ENCODE measurements at regions of chr2 and their contacts with region 1.

Region 1: GRCh38 chr2:218671654-218672566 is at the starts of genes RNF25 and STK36:
- DNase-seq: peak; percentile 60 to 86 (median 79)
- ATAC-seq: peak; percentile 96
- H3K4me3 ChIP-seq: peak within 1 kb of the TSS; percentile 81
- H3K4me3 Mint-ChIP-seq: peak within 1 kb of the TSS; percentile 88 to 100 (median 98)
- H3K27ac ChIP-seq: peak within 1 kb of the TSS; percentile 84
- H3K27ac Mint-ChIP-seq: peak within 1 kb of the TSS; percentile 90 to 98 (median 96)
- H3K4me1 ChIP-seq: peaks cover 9 to 15% of the 10 kb centered on the region in 2 donors
- H3K4me1 Mint-ChIP-seq: peaks cover 14 to 29% (median 24%) of the 10 kb centered on the region in 7 donors
- H3K27me3 ChIP-seq: no peaks in the 10 kb centered on the region
- H3K27me3 Mint-ChIP-seq: no peaks in the 10 kb centered on the region
- total RNA-seq, gene RNF25: 12.6 to 33.4 (median 28.3) TPM
- total RNA-seq, gene STK36: 18.9 to 28.1 (median 19.7) TPM

Region 2: GRCh38 chr2:218471982-218472381 is 199.9 kb before region 1 on chr2:
- CTCF ChIA-PET with region 1: no interaction called
- POLR2A ChIA-PET with region 1: no interaction called
- intact Hi-C with region 1: no loop called
- DNase-seq: no peak
- ATAC-seq: peak; percentile 57
- H3K4me3 ChIP-seq: no peak overlapping the region
- H3K4me3 Mint-ChIP-seq: no peak overlapping the region
- H3K27ac ChIP-seq: no peak overlapping the region
- H3K27ac Mint-ChIP-seq: no peak overlapping the region
- H3K4me1 ChIP-seq: no peaks in the 10 kb centered on the region
- H3K4me1 Mint-ChIP-seq: peaks cover 0 to 12% (median 7%) of the 10 kb centered on the region in 7 donors
- H3K27me3 ChIP-seq: no peaks in the 10 kb centered on the region
- H3K27me3 Mint-ChIP-seq: no peaks in the 10 kb centered on the region

Region 3: DNA sequence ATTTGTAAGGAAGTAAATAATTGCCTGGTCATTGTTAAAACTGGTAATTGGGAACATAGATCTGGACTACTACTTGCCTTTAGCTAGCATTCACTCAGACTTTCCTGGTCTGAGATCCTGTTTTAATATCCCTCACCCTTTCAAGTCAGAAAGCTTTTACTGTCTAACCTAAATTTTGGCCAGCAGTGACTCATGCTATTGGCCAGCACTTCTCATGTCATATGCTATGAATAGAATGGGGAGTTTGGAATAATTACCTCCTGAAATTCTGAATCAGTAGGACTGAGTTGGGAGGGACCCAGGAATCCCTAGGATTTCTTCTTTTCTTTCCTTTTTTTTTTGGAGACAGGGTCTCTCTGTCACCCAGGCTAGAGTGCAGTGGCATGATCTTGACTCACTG is 19.3 kb after region 1 on chr2:
- CTCF ChIA-PET with region 1: interaction called, 5 read pairs
- POLR2A ChIA-PET with region 1: no interaction called
- intact Hi-C with region 1: loop called in 1 of 2 experiments (anchors 1 kb)
- DNase-seq: no peak
- ATAC-seq: no peak
- H3K4me3 ChIP-seq: no peak overlapping the region
- H3K4me3 Mint-ChIP-seq: no peak overlapping the region
- H3K27ac ChIP-seq: no peak overlapping the region
- H3K27ac Mint-ChIP-seq: no peak overlapping the region
- H3K4me1 ChIP-seq: no peaks in the 10 kb centered on the region
- H3K4me1 Mint-ChIP-seq: peaks cover 2 to 5% (median 4%) of the 10 kb centered on the region in 7 donors
- H3K27me3 ChIP-seq: no peaks in the 10 kb centered on the region
- H3K27me3 Mint-ChIP-seq: no peaks in the 10 kb centered on the region

Region 4: DNA sequence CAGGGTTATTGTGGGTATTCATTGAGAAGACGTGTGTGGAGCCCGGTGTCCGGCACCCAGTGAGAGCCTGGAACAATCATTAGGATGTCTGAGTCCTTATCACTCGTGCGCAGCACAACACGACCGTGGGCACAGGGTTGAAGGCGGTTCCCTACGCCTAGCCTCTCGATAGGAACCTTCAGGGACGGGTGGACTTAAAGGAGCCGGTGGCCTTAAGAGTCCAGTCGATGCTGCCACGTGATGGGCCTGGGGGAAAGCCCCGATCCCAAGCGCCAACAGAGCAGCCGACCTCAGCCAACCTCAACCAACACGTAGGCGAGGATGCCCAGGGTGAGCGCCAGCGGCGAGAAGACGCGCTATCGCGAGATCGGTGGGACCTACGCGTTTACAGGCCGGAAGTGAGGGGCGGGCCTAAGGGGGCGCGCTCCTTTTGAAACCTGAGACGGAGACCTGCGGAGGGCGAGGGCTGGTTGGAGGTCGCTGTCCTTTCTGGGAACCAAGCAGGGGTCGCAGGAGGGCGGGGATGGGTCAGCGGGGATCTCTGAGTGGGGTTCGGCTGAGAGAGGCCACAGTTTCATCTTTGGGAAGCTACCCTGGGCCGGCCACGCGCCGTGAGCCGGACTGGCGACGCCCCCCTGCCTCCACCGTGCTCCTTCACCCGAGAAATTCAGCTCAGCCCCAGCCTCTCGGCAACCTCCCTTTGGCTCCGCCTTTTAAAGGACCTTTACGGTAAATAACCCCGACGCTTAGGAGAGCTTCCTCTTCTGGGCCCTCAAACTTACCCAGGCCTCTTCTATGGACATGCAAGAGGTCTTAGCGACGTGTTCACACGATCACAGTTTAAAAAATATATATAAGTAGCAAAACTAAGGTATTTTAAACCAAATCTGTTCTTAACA is 237.1 kb after region 1 on chr2:
- CTCF ChIA-PET with region 1: no interaction called
- POLR2A ChIA-PET with region 1: no interaction called
- intact Hi-C with region 1: loop called in 1 of 2 experiments (anchors 1 kb)
- DNase-seq: peak; percentile 78 to 89 (median 86)
- ATAC-seq: peak; percentile 98
- H3K4me3 ChIP-seq: peak overlapping the region; percentile 65
- H3K4me3 Mint-ChIP-seq: peak overlapping the region; percentile 82 to 94 (median 86)
- H3K27ac ChIP-seq: peak overlapping the region; percentile 53
- H3K27ac Mint-ChIP-seq: peak overlapping the region in 8 of 9 donors; percentile 10 to 88 (median 80)
- H3K4me1 ChIP-seq: peaks cover 10 to 12% of the 10 kb centered on the region in 2 donors
- H3K4me1 Mint-ChIP-seq: peaks cover 0 to 12% (median 6%) of the 10 kb centered on the region in 7 donors
- H3K27me3 ChIP-seq: no peaks in the 10 kb centered on the region
- H3K27me3 Mint-ChIP-seq: peaks cover 14 to 38% (median 16%) of the 10 kb centered on the region in 5 donors

Measured in naive thymus-derived CD4-positive, alpha-beta T cell (primary cell).